ENCODE measurements at regions of chr12 and their contacts with region 1.

Region 1: GRCh38 chr12:124927201-124928094 is 13.0 kb upstream of the UBC start:
- DNase-seq: peak; percentile 84 to 92 (median 91)
- ATAC-seq: peak; percentile 85 to 89 (median 89)
- H3K4me3 ChIP-seq: peak overlapping the region; percentile 35 to 80 (median 68)
- H3K27ac ChIP-seq: peak overlapping the region; percentile 85 to 96 (median 91)
- H3K4me1 ChIP-seq: peaks cover 0 to 23% (median 9%) of the 10 kb centered on the region in 12 donors
- H3K27me3 ChIP-seq: no peaks in the 10 kb centered on the region
- CTCF ChIP-seq: no peak
- POLR2A ChIP-seq: no peak

Region 2: DNA sequence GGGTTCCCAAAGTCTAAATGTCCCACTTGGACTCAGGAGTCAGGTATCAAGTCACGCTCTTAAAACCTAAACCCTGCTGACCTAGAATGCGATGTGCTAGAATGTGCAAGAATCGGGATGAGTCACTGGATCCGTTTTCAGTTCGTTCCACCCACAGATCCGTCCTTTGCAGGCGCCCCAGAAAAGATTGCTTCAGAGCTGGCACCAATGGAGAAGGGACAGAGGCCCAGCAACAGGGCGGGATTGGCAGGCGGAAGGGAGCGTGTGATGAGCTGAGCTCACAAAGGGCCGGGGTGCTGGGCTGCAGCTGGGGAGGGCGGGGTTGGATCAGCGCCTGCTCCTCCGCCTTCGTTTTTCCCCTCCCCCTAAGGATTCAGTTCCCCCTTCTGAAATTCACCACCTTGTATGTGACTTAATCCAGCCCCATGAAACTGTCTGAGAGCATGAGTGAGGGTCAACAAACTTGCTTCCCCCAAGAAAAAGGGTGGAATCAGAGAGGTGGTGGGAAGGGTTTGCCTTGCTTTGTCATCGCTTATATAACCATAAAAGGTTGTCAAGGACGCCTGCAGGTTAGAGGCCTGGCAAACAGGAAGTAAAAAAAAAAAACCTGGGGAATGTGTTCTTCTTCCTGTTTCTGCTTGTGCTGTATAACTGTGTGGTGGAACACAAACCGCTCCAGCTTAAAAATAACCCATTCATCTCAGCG is 10.2 kb before region 1 on chr12:
- intact Hi-C with region 1: loop called in 1 of 10 experiments (anchors 2 kb)
- DNase-seq: peak; percentile 97 to 99 (median 98)
- ATAC-seq: peak; percentile 90 to 94 (median 93)
- H3K4me3 ChIP-seq: peak overlapping the region in 11 of 12 donors; percentile 22 to 97 (median 80)
- H3K27ac ChIP-seq: peak overlapping the region; percentile 99 to 100 (median 100)
- H3K4me1 ChIP-seq: peaks cover 0 to 72% (median 51%) of the 10 kb centered on the region in 12 donors
- H3K27me3 ChIP-seq: no peaks in the 10 kb centered on the region
- CTCF ChIP-seq: no peak
- POLR2A ChIP-seq: peak in 1 of 2 donors; percentile 67

Region 3: GRCh38 chr12:124940549-124941527 is 13.4 kb after region 1 on chr12:
- intact Hi-C with region 1: loop called in 3 of 10 experiments (anchors 1 kb)
- DNase-seq: peak; percentile 90 to 94 (median 94)
- ATAC-seq: peak; percentile 60 to 86 (median 77)
- H3K4me3 ChIP-seq: peak overlapping the region in 11 of 12 donors; percentile 2 to 69 (median 57)
- H3K27ac ChIP-seq: peak overlapping the region; percentile 62 to 96 (median 88)
- H3K4me1 ChIP-seq: peaks cover 0 to 39% (median 25%) of the 10 kb centered on the region in 12 donors
- H3K27me3 ChIP-seq: no peaks in the 10 kb centered on the region
- CTCF ChIP-seq: peak; percentile 83 to 97 (median 92)
- POLR2A ChIP-seq: peak in 1 of 2 donors; percentile 37

Measured in heart left ventricle (tissue), 16 donors.